PC-9 (cell line): ENCODE measurements at regions of chr7 and their contacts with region 1.

Region 1: DNA sequence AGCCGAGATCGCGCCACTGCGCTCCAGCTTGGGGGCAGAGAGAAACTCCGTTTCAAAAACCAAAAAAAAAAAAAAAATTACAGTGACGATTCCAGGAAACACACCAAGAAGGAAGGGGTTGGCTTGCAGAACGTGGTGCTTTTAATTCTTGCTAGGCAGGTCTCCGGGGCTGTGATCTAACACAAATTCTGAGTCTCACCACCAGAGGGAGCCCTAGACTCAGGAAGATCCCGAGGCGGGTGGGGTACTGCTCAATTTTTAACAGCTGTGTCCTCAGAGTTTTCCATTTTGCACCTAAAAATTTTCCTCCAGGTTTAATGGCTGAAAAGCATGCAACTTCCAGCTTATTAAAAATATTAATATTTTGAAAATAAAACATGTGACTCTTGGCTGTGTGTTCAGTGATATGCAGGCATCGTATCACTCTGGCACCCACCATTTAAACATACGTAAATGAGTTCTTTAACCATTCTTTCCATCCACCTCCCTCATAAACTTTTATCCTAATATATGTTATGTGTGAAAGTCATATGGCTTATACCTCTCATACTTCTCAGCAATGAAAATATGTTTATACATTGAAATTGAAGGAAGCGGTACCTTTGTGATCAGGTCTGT is 26.5 kb upstream of the NUB1 start:
- DNase-seq: peak; percentile 57 to 75
- H3K4me3 ChIP-seq: no peak overlapping the region
- H3K27ac ChIP-seq: no peak overlapping the region
- H3K4me1 ChIP-seq: no peaks in the 10 kb centered on the region
- H3K27me3 ChIP-seq: no peaks in the 10 kb centered on the region
- CTCF ChIP-seq: peak; percentile 97

Region 2: GRCh38 chr7:151286148-151286547 is 29.0 kb before region 1 on chr7:
- CTCF ChIA-PET with region 1: interaction called, 10 read pairs
- POLR2A ChIA-PET with region 1: no interaction called
- intact Hi-C with region 1: no loop called
- DNase-seq: no peak
- H3K4me3 ChIP-seq: no peak overlapping the region
- H3K27ac ChIP-seq: no peak overlapping the region
- H3K4me1 ChIP-seq: no peaks in the 10 kb centered on the region
- H3K27me3 ChIP-seq: peaks cover 95% of the 10 kb centered on the region
- CTCF ChIP-seq: no peak

Region 3: DNA sequence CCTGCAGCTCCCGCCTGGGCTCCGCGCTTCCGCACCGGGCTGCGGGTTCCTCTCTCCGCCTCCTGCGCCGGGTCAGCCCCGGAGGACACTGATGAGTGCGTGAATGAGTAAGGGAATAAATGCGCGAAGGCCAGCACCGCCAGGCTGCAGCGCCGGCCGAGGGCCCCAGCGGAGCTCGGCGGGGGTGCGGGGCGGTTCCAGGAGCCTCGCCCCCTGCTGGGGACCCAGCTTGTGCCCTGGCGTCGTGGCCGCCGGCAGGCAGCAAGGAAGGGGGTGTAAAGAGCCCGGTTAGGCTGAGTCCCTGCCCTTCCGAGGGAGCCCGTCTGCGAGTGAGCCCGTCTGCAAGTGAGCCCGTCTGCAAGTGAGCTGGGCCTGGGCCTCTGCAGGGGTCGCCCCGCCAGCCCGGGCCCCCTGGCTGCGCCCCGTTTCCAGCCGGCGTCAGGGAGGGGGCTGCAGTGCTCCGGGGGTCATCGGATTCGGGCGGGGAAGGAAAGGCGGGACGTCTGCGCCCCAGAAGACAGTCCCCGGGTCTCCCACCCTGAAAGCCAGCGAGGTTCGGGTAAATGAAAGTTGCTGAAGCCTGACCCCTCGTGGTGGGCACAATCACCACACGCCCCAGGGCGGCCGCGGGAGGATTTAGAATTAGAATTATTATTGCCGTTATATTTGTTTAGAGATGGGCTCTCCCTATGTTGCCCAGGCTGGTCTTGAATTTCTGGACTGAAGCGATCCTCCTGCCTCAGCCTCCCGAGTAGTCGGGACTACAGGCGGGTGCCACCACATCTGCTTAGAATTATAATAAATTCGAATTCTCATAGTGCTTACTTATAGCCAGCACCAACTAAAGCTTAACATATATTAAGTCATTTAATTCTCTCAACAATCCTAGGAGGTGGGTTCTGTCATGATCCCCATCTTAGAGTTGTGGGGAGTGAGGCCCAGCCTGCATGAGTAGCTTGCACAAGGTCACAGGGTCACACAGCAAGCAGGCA is 133.4 kb after region 1 on chr7:
- CTCF ChIA-PET with region 1: no interaction called
- POLR2A ChIA-PET with region 1: no interaction called
- intact Hi-C with region 1: loop called (anchors 1 kb)
- DNase-seq: peak; percentile 43 to 77
- H3K4me3 ChIP-seq: peak overlapping the region; percentile 53
- H3K27ac ChIP-seq: no peak overlapping the region
- H3K4me1 ChIP-seq: no peaks in the 10 kb centered on the region
- H3K27me3 ChIP-seq: no peaks in the 10 kb centered on the region
- CTCF ChIP-seq: peak; percentile 83

Region 4: GRCh38 chr7:151782598-151783448 is 467.7 kb after region 1 on chr7:
- CTCF ChIA-PET with region 1: interaction called, 3 read pairs
- POLR2A ChIA-PET with region 1: no interaction called
- intact Hi-C with region 1: loop called (anchors 2 kb)
- DNase-seq: peak; percentile 65 to 81
- H3K4me3 ChIP-seq: peak overlapping the region; percentile 49
- H3K27ac ChIP-seq: no peak overlapping the region
- H3K4me1 ChIP-seq: peaks cover 5% of the 10 kb centered on the region; the same call in 1 of the 2 replicates
- H3K27me3 ChIP-seq: peaks cover 11% of the 10 kb centered on the region; the same call in 1 of the 2 replicates
- CTCF ChIP-seq: peak; percentile 95

Region 5: GRCh38 chr7:151936207-151936606 is 621.1 kb after region 1 on chr7:
- CTCF ChIA-PET with region 1: no interaction called
- POLR2A ChIA-PET with region 1: no interaction called
- intact Hi-C with region 1: loop called (anchors 10 kb)
- DNase-seq: no peak
- H3K4me3 ChIP-seq: no peak overlapping the region
- H3K27ac ChIP-seq: no peak overlapping the region
- H3K4me1 ChIP-seq: peaks cover 29% of the 10 kb centered on the region
- H3K27me3 ChIP-seq: peaks cover 5% of the 10 kb centered on the region; the same call in 1 of the 2 replicates
- CTCF ChIP-seq: no peak

Region 6: DNA sequence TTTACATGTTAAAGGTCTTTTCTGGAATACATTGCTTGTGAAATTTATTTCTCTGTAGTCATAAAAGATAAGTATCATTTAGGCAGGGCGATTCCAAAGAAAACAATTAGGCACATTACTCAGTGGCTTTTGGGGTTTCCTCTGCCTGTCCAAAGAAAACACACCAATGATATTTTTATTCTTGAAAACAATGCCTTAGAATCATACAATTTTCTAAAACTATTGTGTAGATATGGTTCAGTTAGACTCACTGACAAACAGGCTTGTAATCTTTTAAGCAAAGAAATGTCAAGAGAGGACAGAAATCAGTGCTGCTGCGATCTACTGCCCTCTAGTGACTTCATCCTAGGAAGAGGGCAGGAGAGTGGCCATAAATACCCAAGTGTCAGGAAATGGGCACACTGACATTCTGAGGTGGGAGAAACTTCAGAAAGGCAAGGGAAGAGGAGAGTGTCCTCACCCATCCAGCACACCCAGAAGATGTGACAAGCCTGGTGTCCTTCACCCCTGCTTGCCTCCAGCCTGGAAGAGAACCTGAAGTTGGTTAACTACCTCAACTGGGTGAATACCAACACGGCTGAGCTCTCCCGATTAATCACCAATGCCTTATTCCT is 830.8 kb after region 1 on chr7:
- CTCF ChIA-PET with region 1: no interaction called
- POLR2A ChIA-PET with region 1: no interaction called
- intact Hi-C with region 1: loop called (anchors 10 kb)
- DNase-seq: peak; percentile 41 to 50
- H3K4me3 ChIP-seq: no peak overlapping the region
- H3K27ac ChIP-seq: no peak overlapping the region
- H3K4me1 ChIP-seq: no peaks in the 10 kb centered on the region
- H3K27me3 ChIP-seq: no peaks in the 10 kb centered on the region
- CTCF ChIP-seq: peak; percentile 77